Tibial artery (tissue), 4 donors: ENCODE measurements at regions of chr14 and their contacts with region 1.

Region 1: DNA sequence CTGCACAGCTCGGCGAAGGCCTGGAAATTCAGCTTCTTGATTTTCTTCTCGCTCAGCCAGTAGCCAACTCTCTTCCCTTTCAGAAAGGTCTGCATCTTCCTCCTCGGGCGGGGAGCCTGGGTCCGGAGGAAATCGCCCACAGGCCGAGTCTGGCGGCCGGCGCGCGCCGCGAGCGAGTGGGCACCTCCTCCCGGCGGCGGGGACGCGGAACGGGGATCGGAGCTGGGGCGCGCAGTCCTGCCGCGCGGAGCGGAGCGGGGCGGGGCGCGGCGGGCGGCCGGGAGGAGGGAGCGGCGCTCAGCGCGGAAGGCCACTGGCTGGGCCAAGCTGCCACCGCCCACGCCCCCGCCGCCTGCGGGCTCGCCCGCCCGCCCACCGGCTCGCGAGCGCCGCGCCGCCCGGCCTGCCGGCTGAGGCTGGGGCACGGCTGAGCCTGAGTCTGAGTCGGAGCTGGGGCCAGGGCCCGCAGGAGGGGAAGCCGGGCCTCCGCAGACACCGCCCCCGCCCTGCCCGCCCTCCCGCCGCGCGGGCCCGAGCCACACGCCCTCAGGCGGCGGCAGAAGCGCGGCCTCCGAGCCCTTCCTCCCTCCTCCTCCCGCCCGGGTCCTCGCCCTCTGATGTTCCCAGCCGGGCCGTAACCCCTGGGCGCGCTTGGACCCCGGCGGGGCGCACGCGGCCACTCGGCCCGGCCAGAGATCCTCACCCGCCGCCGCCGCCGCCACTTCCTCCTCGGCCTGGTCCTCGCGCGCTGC is 480 bp downstream of the ITPK1 start:
- DNase-seq: peak; percentile 77 to 94
- H3K4me3 ChIP-seq: peak overlapping the region; percentile 88 to 92
- H3K27ac ChIP-seq: peak overlapping the region; percentile 88 to 94
- H3K4me1 ChIP-seq: peaks cover 0 to 39% (median 26%) of the 10 kb centered on the region in 4 donors
- H3K27me3 ChIP-seq: no peaks in the 10 kb centered on the region
- CTCF ChIP-seq: no peak

Region 2: GRCh38 chr14:92951912-92952471 is 163.3 kb before region 1 on chr14:
- intact Hi-C with region 1: loop called (anchors 1 kb)
- DNase-seq: peak; percentile 77 to 88
- H3K4me3 ChIP-seq: peak overlapping the region; percentile 9 to 26
- H3K27ac ChIP-seq: peak overlapping the region; percentile 72 to 85
- H3K4me1 ChIP-seq: peaks cover 0 to 43% (median 37%) of the 10 kb centered on the region in 4 donors
- H3K27me3 ChIP-seq: no peaks in the 10 kb centered on the region
- CTCF ChIP-seq: peak; percentile 98

Region 3: DNA sequence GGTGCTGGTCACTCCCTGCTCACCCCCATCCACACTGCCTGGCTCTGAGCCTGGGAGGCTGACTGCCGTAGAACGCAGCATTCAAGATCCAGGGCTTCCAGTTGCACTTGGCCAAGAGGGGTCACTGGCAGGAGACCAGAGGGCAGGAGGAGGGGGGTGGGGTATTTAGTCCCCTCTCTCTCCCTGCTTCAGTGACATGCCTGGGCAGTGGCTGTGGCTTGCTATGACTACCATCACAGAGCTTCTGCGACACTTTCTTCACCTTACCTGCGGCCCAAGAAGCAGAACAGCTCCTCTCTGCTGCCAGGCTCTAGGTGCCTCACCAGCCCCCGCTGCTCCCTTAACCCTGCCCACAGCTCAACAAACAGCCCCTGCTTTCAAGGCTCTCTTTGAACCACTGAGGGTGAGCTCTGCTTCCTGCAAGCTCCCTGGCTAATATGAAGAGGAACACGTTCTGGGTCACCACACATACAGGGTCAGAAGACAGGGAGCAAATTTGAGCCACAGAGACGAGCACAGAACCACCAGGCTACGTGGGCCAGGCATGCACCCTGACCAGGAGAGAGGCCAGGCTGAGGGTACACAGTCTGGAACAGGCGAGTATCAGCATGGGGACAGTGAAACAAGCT is 55.2 kb before region 1 on chr14:
- intact Hi-C with region 1: loop called (anchors 10 kb)
- DNase-seq: no peak
- H3K4me3 ChIP-seq: no peak overlapping the region
- H3K27ac ChIP-seq: no peak overlapping the region
- H3K4me1 ChIP-seq: peaks cover 10 to 74% (median 59%) of the 10 kb centered on the region in 4 donors
- H3K27me3 ChIP-seq: no peaks in the 10 kb centered on the region
- CTCF ChIP-seq: no peak

Region 4: DNA sequence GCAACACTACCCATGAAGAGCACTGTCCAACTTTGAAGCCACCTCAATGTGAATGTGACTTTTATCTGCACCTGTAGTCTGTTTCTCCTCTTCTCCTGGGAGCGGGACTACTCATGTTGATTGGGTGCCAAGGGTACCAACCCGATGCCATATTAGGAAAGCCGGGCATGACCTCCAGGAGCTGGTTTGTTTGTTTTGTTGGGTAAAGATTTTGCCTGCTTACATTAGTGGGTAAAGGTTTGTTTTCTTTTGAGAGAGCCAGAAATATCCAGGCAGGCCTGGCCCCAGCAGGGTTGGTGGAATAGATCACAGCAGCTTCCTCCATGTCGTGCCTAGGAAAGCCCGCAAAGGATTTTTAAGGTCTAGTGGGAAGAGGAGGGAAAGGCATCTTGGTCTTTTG is 20.2 kb after region 1 on chr14:
- intact Hi-C with region 1: loop called (anchors 2 kb)
- DNase-seq: peak in 1 of 2 donors; percentile 71
- H3K4me3 ChIP-seq: no peak overlapping the region
- H3K27ac ChIP-seq: peak overlapping the region; percentile 12 to 67
- H3K4me1 ChIP-seq: peaks cover 0 to 61% (median 16%) of the 10 kb centered on the region in 4 donors
- H3K27me3 ChIP-seq: no peaks in the 10 kb centered on the region
- CTCF ChIP-seq: no peak

Region 5: GRCh38 chr14:93163570-93163969 is 48.3 kb after region 1 on chr14:
- intact Hi-C with region 1: no loop called
- DNase-seq: no peak
- H3K4me3 ChIP-seq: no peak overlapping the region
- H3K27ac ChIP-seq: no peak overlapping the region
- H3K4me1 ChIP-seq: no peaks in the 10 kb centered on the region
- H3K27me3 ChIP-seq: no peaks in the 10 kb centered on the region
- CTCF ChIP-seq: no peak

Region 6: GRCh38 chr14:93206793-93207467 is 91.7 kb after region 1 on chr14 and contains the starts of genes GON7 and UBR7:
- intact Hi-C with region 1: loop called (anchors 1 kb)
- DNase-seq: peak; percentile 95 to 98
- H3K4me3 ChIP-seq: peak within 1 kb of the TSS; percentile 78 to 84
- H3K27ac ChIP-seq: peak within 1 kb of the TSS; percentile 82 to 90
- H3K4me1 ChIP-seq: peaks cover 0 to 32% (median 21%) of the 10 kb centered on the region in 4 donors
- H3K27me3 ChIP-seq: no peaks in the 10 kb centered on the region
- CTCF ChIP-seq: peak; percentile 15 to 36

Region 7: GRCh38 chr14:93332853-93333630 is 217.8 kb after region 1 on chr14 and contains the start of gene BTBD7:
- intact Hi-C with region 1: loop called (anchors 5 kb)
- DNase-seq: peak; percentile 91 to 96
- H3K4me3 ChIP-seq: peak within 1 kb of the TSS; percentile 85 to 97
- H3K27ac ChIP-seq: peak within 1 kb of the TSS; percentile 97
- H3K4me1 ChIP-seq: peaks cover 0 to 24% (median 14%) of the 10 kb centered on the region in 4 donors
- H3K27me3 ChIP-seq: no peaks in the 10 kb centered on the region
- CTCF ChIP-seq: peak in 1 of 2 experiments; percentile 33